H1 (cell line): ENCODE measurements at regions of chr6 and their contacts with region 1.

Region 1: GRCh38 chr6:41941280-41942066 is at the start of gene CCND3:
- DNase-seq: peak in 1 of 2 experiments; percentile 83
- H3K4me3 ChIP-seq: peak within 1 kb of the TSS; percentile 69 to 91 (median 84)
- H3K27ac ChIP-seq: no peak within 1 kb of the TSS
- H3K4me1 ChIP-seq: peaks cover 6 to 28% (median 23%) of the 10 kb centered on the region in 4 experiments
- H3K27me3 ChIP-seq: no peaks in the 10 kb centered on the region
- CTCF ChIP-seq: no peak
- EP300 ChIP-seq: no peak
- POLR2A ChIP-seq: no peak
- RAD21 ChIP-seq: 0 out of 4 replicates have a peak, but pooled peaks of 1 of the 2 experiments have one; percentile 6
- total RNA-seq, gene CCND3: 28.4 and 32.9 TPM in 2 replicates

Region 2: DNA sequence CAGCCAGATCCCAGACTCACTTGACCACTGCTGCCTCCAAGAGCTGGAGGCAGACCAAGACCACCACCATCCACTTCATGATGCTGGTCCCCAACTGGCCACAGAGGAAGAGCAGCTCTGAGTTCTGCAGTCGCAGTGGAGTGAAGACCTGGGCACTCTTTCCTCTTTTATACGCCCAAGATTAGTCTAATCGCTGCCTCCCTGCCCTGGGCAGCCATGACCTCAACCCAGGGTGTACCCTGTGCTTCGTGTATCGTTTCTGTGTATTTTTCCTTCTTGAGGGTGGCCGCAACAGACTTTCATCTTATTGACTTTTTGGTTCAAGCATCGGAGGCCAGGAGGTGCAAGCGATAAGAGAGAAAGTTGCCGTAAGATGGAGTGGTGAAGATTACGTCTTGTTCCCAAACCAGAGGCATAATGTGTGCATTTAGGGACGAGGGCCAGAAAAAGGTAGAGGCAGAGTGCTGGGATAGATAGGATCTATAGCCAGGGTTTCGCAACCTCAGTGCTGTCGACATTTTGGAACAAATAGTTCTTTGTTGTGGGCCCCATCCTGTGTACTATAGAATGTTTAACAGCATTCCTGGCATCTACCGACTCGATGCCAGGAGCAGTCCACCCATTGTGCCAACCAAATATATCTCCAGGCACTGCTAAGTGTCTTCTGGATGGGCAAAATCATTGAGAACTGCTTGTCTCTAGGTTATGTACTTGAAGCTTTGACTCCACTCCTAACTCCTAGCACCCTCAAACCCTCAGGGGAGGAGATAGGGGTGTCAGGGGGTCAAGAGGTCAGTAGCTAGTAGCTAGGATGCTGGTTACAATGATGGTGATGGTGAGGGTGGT is 194.0 kb before region 1 on chr6 and contains the start of gene PGC:
- CTCF ChIA-PET with region 1: no interaction called
- POLR2A ChIA-PET with region 1: no interaction called
- DNase-seq: no peak
- H3K4me3 ChIP-seq: no peak within 1 kb of the TSS
- H3K27ac ChIP-seq: no peak within 1 kb of the TSS
- H3K4me1 ChIP-seq: peaks cover 0 to 3% (median 0%) of the 10 kb centered on the region in 4 experiments; a peak in 2 of 7 replicates
- H3K27me3 ChIP-seq: no peaks in the 10 kb centered on the region
- CTCF ChIP-seq: no peak
- EP300 ChIP-seq: no peak
- POLR2A ChIP-seq: no peak
- RAD21 ChIP-seq: no peak
- total RNA-seq, gene PGC: not detected in 2 replicates

Region 3: GRCh38 chr6:41895300-41896233 is 45.9 kb before region 1 on chr6 and contains the start of gene USP49:
- CTCF ChIA-PET with region 1: interaction called, 5 read pairs
- POLR2A ChIA-PET with region 1: interaction called, 22 read pairs
- DNase-seq: peak; percentile 59 to 97
- H3K4me3 ChIP-seq: peak within 1 kb of the TSS; percentile 80 to 95 (median 86)
- H3K27ac ChIP-seq: peak within 1 kb of the TSS; percentile 83
- H3K4me1 ChIP-seq: peaks cover 0 to 11% (median 4%) of the 10 kb centered on the region in 4 experiments; a peak in 4 of 7 replicates
- H3K27me3 ChIP-seq: no peaks in the 10 kb centered on the region
- CTCF ChIP-seq: no peak
- EP300 ChIP-seq: 0 out of 3 replicates have a peak, but pooled peaks of 1 of the 2 experiments have one; percentile 4
- POLR2A ChIP-seq: peak; percentile 20 to 71
- RAD21 ChIP-seq: no peak
- total RNA-seq, gene USP49: 21.1 and 24.4 TPM in 2 replicates

Region 4: GRCh38 chr6:41966961-41967311 is 25.5 kb after region 1 on chr6:
- CTCF ChIA-PET with region 1: interaction called, 14 read pairs
- POLR2A ChIA-PET with region 1: interaction called, 12 read pairs
- DNase-seq: no peak
- H3K4me3 ChIP-seq: no peak overlapping the region; a peak in 1 of 8 replicates
- H3K27ac ChIP-seq: no peak overlapping the region
- H3K4me1 ChIP-seq: peaks cover 15 to 28% (median 23%) of the 10 kb centered on the region in 4 experiments
- H3K27me3 ChIP-seq: no peaks in the 10 kb centered on the region; a peak in 1 of 7 replicates
- CTCF ChIP-seq: no peak
- EP300 ChIP-seq: no peak
- POLR2A ChIP-seq: no peak
- RAD21 ChIP-seq: no peak

Region 5: GRCh38 chr6:42009966-42010891 is 68.8 kb after region 1 on chr6:
- CTCF ChIA-PET with region 1: interaction called, 13 read pairs
- POLR2A ChIA-PET with region 1: interaction called, 10 read pairs
- DNase-seq: no peak
- H3K4me3 ChIP-seq: no peak overlapping the region; a peak in 1 of 8 replicates
- H3K27ac ChIP-seq: no peak overlapping the region
- H3K4me1 ChIP-seq: peaks cover 0 to 6% (median 3%) of the 10 kb centered on the region in 4 experiments; a peak in 5 of 7 replicates
- H3K27me3 ChIP-seq: no peaks in the 10 kb centered on the region
- CTCF ChIP-seq: no peak
- EP300 ChIP-seq: no peak
- POLR2A ChIP-seq: no peak
- RAD21 ChIP-seq: no peak

Region 6: DNA sequence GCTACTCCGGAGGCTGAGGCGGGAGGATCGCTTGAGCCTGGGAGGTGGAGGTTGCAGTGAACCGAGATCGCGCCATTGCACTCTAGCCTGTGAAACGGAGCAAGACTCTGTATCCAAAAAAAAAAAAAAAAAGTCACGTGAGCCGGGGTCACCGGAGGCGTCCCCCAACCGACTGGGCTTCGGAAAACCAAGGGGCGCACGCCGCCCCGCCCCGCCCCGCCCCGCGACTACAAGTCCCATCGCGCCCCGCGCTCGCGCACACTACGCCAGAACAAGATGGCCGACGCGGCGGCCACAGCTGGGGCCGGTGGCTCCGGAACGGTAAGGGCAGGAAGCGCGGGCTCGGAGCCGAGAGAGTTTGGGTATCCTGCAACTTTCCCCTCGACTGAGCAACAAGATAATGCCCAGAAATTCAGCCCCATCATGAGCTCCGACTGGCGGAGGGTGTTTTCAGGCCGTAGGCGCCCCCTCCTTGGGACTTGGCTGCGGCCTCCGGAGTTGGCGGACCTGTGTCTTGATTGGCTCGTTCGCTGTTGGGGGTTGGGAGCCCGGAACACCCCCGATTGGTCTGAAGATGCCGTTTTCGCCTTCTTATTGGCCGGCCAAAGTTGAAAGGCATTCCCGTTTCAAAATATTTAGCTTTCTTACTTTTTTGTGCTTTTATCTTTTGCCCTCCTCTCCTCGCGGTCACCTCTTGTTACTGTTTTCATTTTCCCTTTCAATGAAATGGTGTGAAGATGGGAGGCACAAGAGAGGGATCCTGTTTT is 109.0 kb after region 1 on chr6 and contains the start of gene TAF8:
- CTCF ChIA-PET with region 1: interaction called, 219 read pairs
- POLR2A ChIA-PET with region 1: interaction called, 157 read pairs
- DNase-seq: peak; percentile 79 to 91
- H3K4me3 ChIP-seq: peak within 1 kb of the TSS; percentile 85 to 99 (median 90)
- H3K27ac ChIP-seq: peak within 1 kb of the TSS; percentile 95
- H3K4me1 ChIP-seq: peaks cover 13 to 16% (median 14%) of the 10 kb centered on the region in 4 experiments
- H3K27me3 ChIP-seq: peaks cover 38 to 45% (median 42%) of the 10 kb centered on the region in 4 experiments
- CTCF ChIP-seq: no peak; a peak in 1 of 4 replicates
- EP300 ChIP-seq: no peak
- POLR2A ChIP-seq: peak in 1 of 2 experiments; percentile 100; a peak in 2 of 3 replicates
- RAD21 ChIP-seq: 0 out of 4 replicates have a peak, but pooled peaks of 1 of the 2 experiments have one; percentile 4
- total RNA-seq, gene TAF8: 32.7 and 34.0 TPM in 2 replicates